Panc1 (cell line): ENCODE measurements at regions of chr20 and their contacts with region 1.

Region 1: GRCh38 chr20:37406010-37406998 is 60.4 kb downstream of the SRC start:
- DNase-seq: no peak
- ATAC-seq: peak; percentile 88
- H3K4me3 ChIP-seq: peak overlapping the region; percentile 40 to 63
- H3K27ac ChIP-seq: peak overlapping the region; percentile 74
- H3K4me1 ChIP-seq: peaks cover 7% of the 10 kb centered on the region
- H3K27me3 ChIP-seq: no peaks in the 10 kb centered on the region
- CTCF ChIP-seq: no peak

Region 2: GRCh38 chr20:37527638-37528441 is 121.5 kb after region 1 on chr20 and contains the start of gene BLCAP:
- CTCF ChIA-PET with region 1: no interaction called
- POLR2A ChIA-PET with region 1: no interaction called
- in situ Hi-C with region 1: no loop called
- intact Hi-C with region 1: loop called (anchors 5 kb)
- DNase-seq: peak; percentile 75
- ATAC-seq: peak; percentile 95
- H3K4me3 ChIP-seq: peak within 1 kb of the TSS; percentile 86 to 99
- H3K27ac ChIP-seq: peak within 1 kb of the TSS; percentile 97
- H3K4me1 ChIP-seq: peaks cover 12% of the 10 kb centered on the region
- H3K27me3 ChIP-seq: no peaks in the 10 kb centered on the region
- CTCF ChIP-seq: no peak
- total RNA-seq, gene BLCAP: 50.1 TPM